HCT116 (cell line): ENCODE measurements at regions of chr6 and their contacts with region 1.

Region 1: DNA sequence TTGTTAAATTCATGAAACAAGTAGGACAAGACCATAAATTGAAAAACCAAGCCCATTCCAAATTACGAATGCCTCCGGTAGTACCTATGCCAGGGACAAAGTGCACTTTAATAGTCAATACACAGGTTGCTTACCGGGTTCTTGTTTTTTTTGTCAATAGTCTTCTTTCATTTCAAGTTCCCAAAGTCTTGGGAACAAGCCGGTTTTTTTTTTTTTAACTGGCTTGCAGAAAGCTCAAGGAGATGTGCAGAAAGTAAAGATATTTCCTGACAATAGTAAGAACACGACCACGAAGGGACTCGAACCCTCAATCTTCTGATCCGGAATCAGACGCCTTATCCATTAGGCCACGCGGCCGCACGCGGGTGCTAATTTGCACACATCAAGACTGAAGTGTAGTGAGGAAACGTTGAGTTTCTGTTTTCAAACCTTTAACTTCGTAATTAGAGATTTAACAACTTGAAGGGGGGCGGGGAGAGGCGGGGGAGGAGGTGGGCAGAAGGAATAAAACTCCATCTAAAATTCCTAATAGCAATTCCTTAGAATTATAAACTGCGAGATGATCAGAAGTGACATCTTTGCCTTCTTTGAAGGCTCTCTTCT is 181.0 kb downstream of the TRIM27 start:
- DNase-seq: peak; percentile 86
- ATAC-seq: peak; percentile 65
- H3K4me3 ChIP-seq: peak overlapping the region; percentile 34 to 59
- H3K27ac ChIP-seq: peak overlapping the region; percentile 46
- H3K4me1 ChIP-seq: peaks cover 3 to 20% of the 10 kb centered on the region in 2 experiments; a peak in 3 of 4 replicates
- H3K27me3 ChIP-seq: no peaks in the 10 kb centered on the region
- CTCF ChIP-seq: no peak
- POLR2A ChIP-seq: no peak
- RAD21 ChIP-seq: no peak

Region 2: DNA sequence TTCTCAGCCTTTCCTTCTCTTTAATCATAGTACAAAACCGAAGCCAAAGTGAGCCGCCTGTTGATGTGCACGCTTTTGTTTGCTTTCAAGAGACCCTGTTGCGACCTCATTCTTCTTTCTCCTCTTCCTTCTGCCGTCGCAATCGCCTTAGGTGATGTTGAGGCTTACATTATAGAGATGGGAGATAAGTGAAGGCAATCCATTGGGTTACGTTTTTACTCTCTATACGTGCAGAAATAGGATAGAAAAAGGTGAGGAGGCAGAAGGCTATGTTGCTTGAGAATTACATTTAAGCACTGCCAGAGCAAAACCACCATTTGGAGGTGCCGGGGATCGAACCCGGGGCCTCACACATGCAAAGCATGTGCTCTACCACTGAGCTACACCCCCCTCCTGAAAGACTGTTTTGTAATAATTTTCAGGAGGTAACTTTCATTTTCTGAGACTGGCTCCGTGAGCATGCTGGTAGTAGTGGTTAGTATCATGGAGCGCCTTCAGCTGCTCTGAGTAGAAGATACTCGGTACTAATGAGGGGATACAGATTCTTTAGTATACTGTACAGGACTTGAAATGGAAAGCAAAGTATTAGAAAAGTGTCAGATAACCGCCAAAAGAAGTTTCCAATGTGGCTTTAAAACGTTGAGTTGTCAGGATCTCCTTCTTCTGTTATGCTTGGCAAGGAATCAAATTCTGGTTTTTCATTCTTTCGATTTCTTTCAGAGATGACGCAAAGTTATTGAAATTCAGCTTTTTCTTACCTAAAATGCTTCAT is 15.5 kb after region 1 on chr6:
- CTCF ChIA-PET with region 1: interaction called, 4 read pairs
- POLR2A ChIA-PET with region 1: interaction called, 6 read pairs
- RAD21 ChIA-PET with region 1: no interaction called
- intact Hi-C with region 1: loop called (anchors 2 kb)
- DNase-seq: peak; percentile 86
- ATAC-seq: peak; percentile 76
- H3K4me3 ChIP-seq: peak overlapping the region; percentile 34 to 58
- H3K27ac ChIP-seq: peak overlapping the region; percentile 79
- H3K4me1 ChIP-seq: peaks cover 14 to 37% of the 10 kb centered on the region in 2 experiments
- H3K27me3 ChIP-seq: no peaks in the 10 kb centered on the region
- CTCF ChIP-seq: no peak
- POLR2A ChIP-seq: peak; percentile 15
- RAD21 ChIP-seq: no peak

Region 3: GRCh38 chr6:28789553-28790083 is 46.8 kb after region 1 on chr6:
- CTCF ChIA-PET with region 1: no interaction called
- POLR2A ChIA-PET with region 1: no interaction called
- RAD21 ChIA-PET with region 1: no interaction called
- intact Hi-C with region 1: loop called (anchors 2 kb)
- DNase-seq: peak; percentile 68
- ATAC-seq: peak; percentile 67
- H3K4me3 ChIP-seq: peak overlapping the region; percentile 48 to 55
- H3K27ac ChIP-seq: peak overlapping the region; percentile 5; the same call in 1 of the 2 replicates
- H3K4me1 ChIP-seq: peaks cover 5 to 23% of the 10 kb centered on the region in 2 experiments; a peak in 2 of 4 replicates
- H3K27me3 ChIP-seq: no peaks in the 10 kb centered on the region
- CTCF ChIP-seq: no peak
- POLR2A ChIP-seq: no peak
- RAD21 ChIP-seq: no peak

Region 4: GRCh38 chr6:28807682-28808280 is 65.0 kb after region 1 on chr6:
- CTCF ChIA-PET with region 1: no interaction called
- POLR2A ChIA-PET with region 1: no interaction called
- RAD21 ChIA-PET with region 1: no interaction called
- intact Hi-C with region 1: no loop called
- DNase-seq: peak; percentile 75
- ATAC-seq: peak; percentile 81
- H3K4me3 ChIP-seq: no peak overlapping the region
- H3K27ac ChIP-seq: no peak overlapping the region
- H3K4me1 ChIP-seq: peaks cover 0 to 5% of the 10 kb centered on the region in 2 experiments; a peak in 2 of 4 replicates
- H3K27me3 ChIP-seq: no peaks in the 10 kb centered on the region
- CTCF ChIP-seq: no peak
- POLR2A ChIP-seq: no peak
- RAD21 ChIP-seq: 0 out of 2 replicates have a peak, but pooled peaks have one; percentile 1

Region 5: DNA sequence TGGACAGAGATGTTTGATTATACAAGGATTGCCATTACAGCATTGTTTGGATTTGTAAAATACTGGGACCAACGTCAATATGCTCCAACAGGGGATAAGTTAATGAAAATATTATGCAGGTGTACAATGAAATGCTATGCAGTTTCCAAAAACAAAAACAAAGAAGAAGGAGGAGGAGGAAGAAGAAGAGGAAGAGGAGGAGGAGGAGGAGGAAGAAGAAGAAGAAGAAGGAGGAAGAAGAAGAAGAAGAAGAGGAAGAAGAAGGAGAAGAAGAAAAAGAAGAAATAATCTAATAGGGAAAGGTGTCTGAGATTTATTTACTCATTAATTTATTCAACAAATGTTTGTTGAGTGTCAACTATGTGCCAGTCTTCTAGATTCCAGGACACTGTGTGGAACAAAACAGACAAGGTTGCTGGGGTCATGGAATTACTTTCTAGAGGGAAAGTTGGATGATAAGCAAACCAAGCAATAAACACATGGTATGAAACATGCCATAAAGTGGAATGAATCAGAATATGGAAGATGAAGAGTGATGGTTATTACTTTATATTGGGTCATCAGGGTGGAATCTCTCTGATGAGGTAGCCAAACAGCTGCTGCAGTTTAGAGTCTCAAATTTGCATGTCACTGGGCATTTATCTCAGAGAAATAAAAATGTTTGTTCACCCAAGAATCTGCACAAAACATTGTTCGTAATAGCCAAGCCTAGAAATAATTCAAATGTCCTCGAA is 187.3 kb after region 1 on chr6:
- CTCF ChIA-PET with region 1: no interaction called
- POLR2A ChIA-PET with region 1: no interaction called
- RAD21 ChIA-PET with region 1: no interaction called
- intact Hi-C with region 1: no loop called
- DNase-seq: no peak
- ATAC-seq: no peak
- H3K4me3 ChIP-seq: no peak overlapping the region
- H3K27ac ChIP-seq: no peak overlapping the region
- H3K4me1 ChIP-seq: peaks cover under 1 to 13% of the 10 kb centered on the region in 2 experiments; a peak in 3 of 4 replicates
- H3K27me3 ChIP-seq: no peaks in the 10 kb centered on the region
- CTCF ChIP-seq: no peak
- POLR2A ChIP-seq: no peak
- RAD21 ChIP-seq: no peak

Region 6: GRCh38 chr6:28940858-28941680 is 198.3 kb after region 1 on chr6:
- CTCF ChIA-PET with region 1: no interaction called
- POLR2A ChIA-PET with region 1: no interaction called
- RAD21 ChIA-PET with region 1: no interaction called
- intact Hi-C with region 1: loop called (anchors 5 kb)
- DNase-seq: peak; percentile 79
- ATAC-seq: peak; percentile 74
- H3K4me3 ChIP-seq: peak overlapping the region; percentile 42 to 65
- H3K27ac ChIP-seq: peak overlapping the region; percentile 51
- H3K4me1 ChIP-seq: peaks cover 11 to 43% of the 10 kb centered on the region in 2 experiments; a peak in 3 of 4 replicates
- H3K27me3 ChIP-seq: no peaks in the 10 kb centered on the region
- CTCF ChIP-seq: 0 out of 6 replicates have a peak, but pooled peaks of 1 of the 3 experiments have one; percentile 15
- POLR2A ChIP-seq: peak; percentile 25
- RAD21 ChIP-seq: no peak